ENCODE measurements at regions of chr6 and their contacts with region 1.

Region 1: GRCh38 chr6:69796642-69797390 is at the start of gene LMBRD1:
- DNase-seq: peak; percentile 99
- total RNA-seq, gene LMBRD1: 37.0 TPM

Region 2: DNA sequence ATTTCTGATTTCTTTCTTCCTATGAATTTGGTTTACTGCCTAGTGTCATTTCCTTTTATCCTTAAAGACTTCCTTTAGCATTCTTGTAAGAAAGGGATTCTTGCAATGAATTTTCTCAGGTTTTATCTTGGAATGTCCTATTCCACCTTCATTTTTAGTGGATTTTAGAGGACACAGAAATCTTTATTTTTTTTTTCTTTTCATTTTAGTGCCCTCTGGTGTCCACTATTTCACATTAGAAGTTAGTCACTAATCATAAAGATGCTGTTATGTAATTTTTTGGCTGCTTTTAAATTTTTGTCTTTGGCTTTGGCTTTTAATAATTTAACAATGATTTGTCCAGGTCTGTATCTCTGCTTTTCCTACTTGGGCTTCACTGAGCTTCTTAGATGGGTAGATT is 28.2 kb before region 1 on chr6:
- intact Hi-C with region 1: no loop called
- DNase-seq: no peak

Region 3: GRCh38 chr6:69835414-69836179 is 38.8 kb after region 1 on chr6:
- intact Hi-C with region 1: no loop called
- DNase-seq: no peak

Region 4: GRCh38 chr6:69866770-69867638 is 70.2 kb after region 1 on chr6:
- intact Hi-C with region 1: loop called (anchors 5 kb)
- DNase-seq: peak; percentile 79

Region 5: DNA sequence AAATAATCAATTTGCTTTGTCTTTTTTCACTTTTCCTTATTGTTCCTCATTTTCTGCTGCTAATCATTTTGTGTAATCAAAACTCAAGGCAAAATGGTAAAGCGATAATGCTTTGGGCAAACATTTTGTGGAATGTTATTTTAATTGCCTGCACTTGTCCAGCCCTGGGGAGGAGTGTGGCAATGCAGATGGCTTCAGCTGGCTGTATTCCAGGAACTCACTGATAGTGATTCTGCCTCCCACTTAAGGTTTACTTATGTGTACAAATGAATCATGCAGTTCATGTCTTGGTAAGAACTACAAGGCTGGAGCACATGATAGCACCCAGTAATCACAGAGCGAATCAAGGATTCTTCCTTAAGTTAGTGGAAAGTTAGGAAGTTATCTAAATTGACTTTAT is 177.4 kb after region 1 on chr6:
- intact Hi-C with region 1: no loop called
- DNase-seq: no peak

Region 6: GRCh38 chr6:70725817-70726415 is 929.1 kb after region 1 on chr6:
- intact Hi-C with region 1: no loop called
- DNase-seq: no peak